ENCODE measurements at regions of chr11 and their contacts with region 1.

Region 1: DNA sequence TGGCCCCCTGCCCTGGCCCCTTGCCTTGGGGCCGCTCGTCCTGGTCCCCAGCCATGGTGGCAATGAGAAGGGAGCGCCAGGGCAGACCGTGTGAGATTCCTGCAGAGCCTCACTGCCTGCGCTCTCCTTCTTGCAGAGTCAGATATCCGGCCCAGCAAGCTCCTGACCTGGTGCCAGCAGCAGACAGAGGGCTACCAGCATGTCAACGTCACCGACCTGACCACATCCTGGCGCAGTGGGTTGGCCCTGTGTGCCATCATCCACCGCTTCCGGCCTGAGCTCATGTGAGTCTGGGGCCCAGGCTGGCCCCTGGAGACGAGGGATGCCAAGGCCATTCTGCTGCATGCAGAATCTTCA is 114.1 kb downstream of the MICAL2 start:
- DNase-seq: peak; percentile 98
- H3K4me3 Mint-ChIP-seq: peak overlapping the region; percentile 78
- H3K27ac Mint-ChIP-seq: peak overlapping the region; percentile 98
- H3K4me1 Mint-ChIP-seq: peaks cover 52% of the 10 kb centered on the region
- H3K27me3 Mint-ChIP-seq: no peaks in the 10 kb centered on the region

Region 2: GRCh38 chr11:12087075-12088004 is 137.2 kb before region 1 on chr11:
- CTCF ChIA-PET with region 1: interaction called, 16 read pairs
- POLR2A ChIA-PET with region 1: interaction called, 3 read pairs
- intact Hi-C with region 1: no loop called
- DNase-seq: peak; percentile 64
- H3K4me3 Mint-ChIP-seq: peak overlapping the region; percentile 13
- H3K27ac Mint-ChIP-seq: peak overlapping the region; percentile 68
- H3K4me1 Mint-ChIP-seq: peaks cover 60% of the 10 kb centered on the region
- H3K27me3 Mint-ChIP-seq: no peaks in the 10 kb centered on the region

Region 3: GRCh38 chr11:12174477-12175143 is 49.9 kb before region 1 on chr11:
- CTCF ChIA-PET with region 1: no interaction called
- POLR2A ChIA-PET with region 1: interaction called, 6 read pairs
- intact Hi-C with region 1: loop called (anchors 1 kb)
- DNase-seq: no peak
- H3K4me3 Mint-ChIP-seq: peak overlapping the region; percentile 27
- H3K27ac Mint-ChIP-seq: peak overlapping the region; percentile 93
- H3K4me1 Mint-ChIP-seq: peaks cover 68% of the 10 kb centered on the region
- H3K27me3 Mint-ChIP-seq: no peaks in the 10 kb centered on the region

Region 4: DNA sequence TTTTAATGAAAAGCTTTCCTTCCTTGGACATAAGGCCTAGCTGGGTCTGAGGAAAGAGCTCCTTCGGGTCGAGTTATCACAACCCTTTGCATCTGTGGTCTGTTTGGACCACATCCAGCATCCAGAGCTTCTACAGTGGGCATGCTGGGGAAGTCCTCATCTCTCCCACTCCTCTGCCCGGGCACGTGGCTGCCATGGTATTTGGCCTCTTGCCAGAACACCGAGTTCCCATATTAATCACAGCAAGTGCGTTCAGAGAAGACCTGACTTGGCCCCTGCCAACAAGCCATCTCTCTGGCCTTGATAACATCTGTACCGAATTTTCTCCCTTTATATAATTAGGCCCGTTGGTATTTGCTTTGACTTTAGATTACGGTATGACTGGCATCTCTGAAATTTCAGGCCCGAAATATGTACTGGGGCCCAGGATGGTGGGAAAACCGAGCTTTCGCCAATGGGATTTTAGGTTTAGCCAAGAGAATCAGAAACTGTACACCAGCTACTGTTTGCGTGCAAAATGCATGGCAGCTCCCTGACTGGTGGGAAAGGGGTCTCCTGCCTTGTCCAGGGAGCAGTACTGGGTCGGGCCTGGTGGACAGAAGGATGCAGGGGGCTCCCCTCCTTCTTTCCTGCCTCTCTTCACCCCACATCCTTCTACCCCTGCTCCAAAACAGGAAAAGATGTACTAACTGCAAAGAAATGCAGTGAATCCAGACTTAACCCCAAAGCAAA is 24.1 kb before region 1 on chr11:
- CTCF ChIA-PET with region 1: interaction called, 10 read pairs
- POLR2A ChIA-PET with region 1: interaction called, 44 read pairs
- intact Hi-C with region 1: loop called (anchors 1 kb)
- DNase-seq: peak; percentile 72
- H3K4me3 Mint-ChIP-seq: peak overlapping the region; percentile 26
- H3K27ac Mint-ChIP-seq: peak overlapping the region; percentile 98
- H3K4me1 Mint-ChIP-seq: peaks cover 89% of the 10 kb centered on the region
- H3K27me3 Mint-ChIP-seq: no peaks in the 10 kb centered on the region

Region 5: DNA sequence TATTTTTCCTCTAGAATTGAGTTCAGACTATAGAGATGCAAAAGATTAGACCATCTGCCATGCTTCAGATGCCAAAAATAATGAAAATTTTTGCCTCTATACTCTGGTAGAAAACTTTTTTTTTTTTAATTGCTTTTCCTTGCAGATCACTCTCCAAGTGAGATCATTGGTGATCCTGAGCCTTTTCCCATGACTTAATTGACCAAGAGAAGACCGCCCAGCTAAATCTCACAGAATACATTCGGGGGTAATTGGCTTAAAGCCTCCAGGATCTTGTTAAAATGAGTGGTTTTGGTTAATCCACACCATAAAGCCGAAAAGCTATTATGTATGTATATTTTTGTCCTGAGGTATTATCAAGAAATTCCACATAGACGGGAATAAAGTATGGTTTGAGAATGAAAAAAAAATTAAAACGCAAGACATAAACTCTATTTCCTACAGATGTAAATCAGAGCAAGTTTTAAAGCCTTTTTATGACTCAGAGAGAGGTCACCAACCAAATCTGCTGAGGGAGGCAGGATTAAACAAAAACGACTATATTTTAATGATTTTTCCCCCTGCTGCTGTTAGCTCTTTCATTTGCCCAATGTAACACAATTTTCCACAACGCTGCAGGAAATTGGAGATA is 216.8 kb after region 1 on chr11:
- CTCF ChIA-PET with region 1: no interaction called
- POLR2A ChIA-PET with region 1: no interaction called
- intact Hi-C with region 1: no loop called
- DNase-seq: no peak
- H3K4me3 Mint-ChIP-seq: no peak overlapping the region
- H3K27ac Mint-ChIP-seq: no peak overlapping the region
- H3K4me1 Mint-ChIP-seq: no peaks in the 10 kb centered on the region
- H3K27me3 Mint-ChIP-seq: no peaks in the 10 kb centered on the region

Region 6: GRCh38 chr11:12539572-12539971 is 315.1 kb after region 1 on chr11:
- CTCF ChIA-PET with region 1: no interaction called
- POLR2A ChIA-PET with region 1: no interaction called
- intact Hi-C with region 1: no loop called
- DNase-seq: no peak
- H3K4me3 Mint-ChIP-seq: no peak overlapping the region
- H3K27ac Mint-ChIP-seq: no peak overlapping the region
- H3K4me1 Mint-ChIP-seq: no peaks in the 10 kb centered on the region
- H3K27me3 Mint-ChIP-seq: peaks cover 9% of the 10 kb centered on the region

Measured in activated CD4-positive, alpha-beta memory T cell treated with anti-CD3 and anti-CD28 coated beads for 36 hours (primary cell).